Vagina (tissue), 2 donors: ENCODE measurements at regions of chr18 and their contacts with region 1.

Region 1: DNA sequence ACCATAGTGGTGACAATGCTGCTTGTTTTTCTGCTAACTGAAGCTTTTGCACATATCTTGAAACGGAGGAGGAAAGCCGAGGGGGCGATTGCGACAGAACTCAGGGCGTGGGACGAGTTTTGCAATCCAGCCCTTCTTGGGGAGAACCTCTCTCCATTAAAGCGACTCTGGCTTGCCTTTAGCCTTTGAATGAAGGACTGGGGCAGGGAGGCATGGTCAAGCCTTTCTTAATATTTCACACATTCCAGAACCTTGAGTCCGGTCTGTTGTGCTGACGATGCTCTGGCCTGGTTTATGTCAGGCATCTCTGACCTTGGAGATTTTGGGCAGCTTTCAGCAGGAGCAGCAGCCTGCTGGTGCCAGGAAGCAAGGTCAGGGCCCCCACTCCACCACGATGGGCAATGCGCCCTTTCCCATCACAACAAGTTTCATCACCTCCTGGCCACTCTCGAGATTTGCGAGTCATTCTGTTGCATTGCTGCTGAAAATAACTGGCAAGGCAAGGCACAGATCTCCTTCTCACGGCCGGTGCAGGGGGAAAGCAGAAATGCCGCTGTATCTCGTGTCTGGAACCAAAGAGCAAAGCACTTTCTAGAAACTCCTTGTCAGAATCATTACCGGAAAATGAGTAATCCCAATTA is 10.8 kb downstream of the EMILIN2 start:
- DNase-seq: peak; percentile 61 to 99
- H3K4me3 ChIP-seq: no peak overlapping the region
- H3K27ac ChIP-seq: peak overlapping the region; percentile 75
- H3K4me1 ChIP-seq: peaks cover 36% of the 10 kb centered on the region
- H3K27me3 ChIP-seq: no peaks in the 10 kb centered on the region
- CTCF ChIP-seq: no peak
- POLR2A ChIP-seq: no peak

Region 2: GRCh38 chr18:2197945-2198344 is 659.7 kb before region 1 on chr18:
- intact Hi-C with region 1: no loop called
- DNase-seq: no peak
- H3K4me3 ChIP-seq: no peak overlapping the region
- H3K27ac ChIP-seq: no peak overlapping the region
- H3K4me1 ChIP-seq: no peaks in the 10 kb centered on the region
- H3K27me3 ChIP-seq: no peaks in the 10 kb centered on the region
- CTCF ChIP-seq: no peak
- POLR2A ChIP-seq: no peak

Region 3: DNA sequence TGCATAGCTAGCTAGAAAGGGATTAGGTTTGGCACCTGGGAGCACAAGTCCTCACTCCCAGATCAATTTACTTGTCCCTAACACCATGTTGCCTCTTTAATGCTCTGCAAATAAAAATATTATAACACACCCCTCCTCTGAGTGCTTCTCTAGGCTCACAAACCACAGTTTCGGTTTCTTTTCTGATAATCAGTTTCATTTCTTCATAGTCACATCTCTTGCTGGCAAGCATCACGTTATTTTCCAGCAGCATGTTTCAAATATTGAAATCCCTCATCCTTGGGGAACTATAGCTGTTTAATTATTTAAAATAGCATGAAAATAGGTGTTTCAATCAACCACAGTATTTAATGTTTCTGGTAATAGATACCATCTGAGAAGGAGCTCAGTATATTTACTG is 216.0 kb before region 1 on chr18:
- intact Hi-C with region 1: no loop called
- DNase-seq: no peak
- H3K4me3 ChIP-seq: peak overlapping the region in 1 of 2 donors; percentile 26
- H3K27ac ChIP-seq: peak overlapping the region; percentile 51
- H3K4me1 ChIP-seq: peaks cover 12% of the 10 kb centered on the region
- H3K27me3 ChIP-seq: no peaks in the 10 kb centered on the region
- CTCF ChIP-seq: no peak
- POLR2A ChIP-seq: no peak

Region 4: DNA sequence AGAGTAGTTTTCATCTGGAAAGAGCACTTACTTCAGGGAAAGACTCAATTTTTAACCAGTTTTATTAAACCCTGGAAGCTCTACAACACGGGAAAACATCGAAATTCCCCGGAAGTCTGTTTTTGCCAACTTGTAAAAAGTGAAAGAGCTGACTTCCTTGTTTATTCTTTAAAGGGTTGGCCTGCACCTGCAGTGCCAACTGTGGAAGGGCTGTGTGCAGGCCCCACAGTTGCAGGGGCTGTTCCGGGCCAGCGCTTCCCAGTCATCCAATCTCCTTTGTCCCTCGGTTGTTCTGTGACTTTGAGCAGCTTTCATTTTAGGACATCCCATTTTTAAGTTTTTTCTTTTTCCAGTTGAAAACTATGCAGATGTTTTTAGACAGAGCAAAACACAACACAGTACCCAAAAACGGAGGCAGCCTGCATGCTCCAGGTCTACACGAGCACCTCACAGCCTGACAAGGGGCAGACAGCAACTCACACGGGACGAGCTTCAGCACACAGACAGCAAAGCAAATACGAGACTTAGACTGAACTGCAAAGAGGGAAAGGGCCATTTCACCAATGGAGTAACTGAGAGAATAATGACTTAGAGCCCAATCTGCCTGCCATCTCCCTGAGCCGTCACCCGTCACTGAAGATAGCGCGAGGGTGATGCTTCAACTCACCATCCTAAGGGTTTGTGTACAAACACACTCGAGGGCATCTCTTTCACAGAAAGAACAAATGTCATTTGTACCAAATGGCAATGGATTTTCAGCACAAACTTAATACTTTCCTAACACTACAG is 59.8 kb after region 1 on chr18:
- intact Hi-C with region 1: loop called (anchors 10 kb)
- DNase-seq: peak in 1 of 2 donors; percentile 74
- H3K4me3 ChIP-seq: no peak overlapping the region
- H3K27ac ChIP-seq: peak overlapping the region; percentile 59
- H3K4me1 ChIP-seq: peaks cover 17% of the 10 kb centered on the region
- H3K27me3 ChIP-seq: no peaks in the 10 kb centered on the region
- CTCF ChIP-seq: no peak
- POLR2A ChIP-seq: no peak